ENCODE measurements at regions of chr13 and their contacts with region 1.

Region 1: DNA sequence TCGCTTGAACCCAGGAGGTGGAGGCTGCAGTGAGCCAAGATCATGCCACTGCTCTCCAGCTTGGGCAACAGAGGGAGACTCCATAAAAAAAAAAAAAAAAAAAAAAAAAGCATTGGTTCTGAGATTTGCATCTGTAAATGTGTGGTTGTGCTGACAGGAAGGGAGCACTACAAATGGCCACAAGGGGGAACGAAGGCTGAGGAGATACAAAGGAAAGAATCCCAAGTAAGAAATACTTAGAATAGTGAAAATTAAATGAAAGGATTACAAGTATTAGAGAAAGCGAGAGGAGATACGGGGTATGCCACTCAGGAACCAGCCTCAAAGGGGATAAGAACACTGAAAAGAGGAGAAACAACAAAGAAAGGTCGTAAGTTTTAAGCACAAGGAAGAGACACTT is 284.9 kb downstream of the KLF12 start:
- DNase-seq: peak in 2 of 5 donors; percentile 20 to 29
- H3K4me3 ChIP-seq: no peak overlapping the region
- H3K4me3 Mint-ChIP-seq: peak overlapping the region in 5 of 8 donors; percentile 1 to 52 (median 10)
- H3K27ac ChIP-seq: no peak overlapping the region
- H3K27ac Mint-ChIP-seq: peak overlapping the region in 5 of 7 donors; percentile 6 to 62 (median 52)
- H3K4me1 ChIP-seq: peaks cover 33% of the 10 kb centered on the region
- H3K4me1 Mint-ChIP-seq: peaks cover 31 to 59% (median 48%) of the 10 kb centered on the region in 4 donors
- H3K27me3 ChIP-seq: no peaks in the 10 kb centered on the region
- H3K27me3 Mint-ChIP-seq: no peaks in the 10 kb centered on the region

Region 2: GRCh38 chr13:73835138-73835721 is 14.1 kb before region 1 on chr13:
- CTCF ChIA-PET with region 1: interaction called, 23 read pairs
- POLR2A ChIA-PET with region 1: no interaction called
- intact Hi-C with region 1: no loop called
- DNase-seq: peak in 4 of 5 donors; percentile 45 to 56 (median 49)
- H3K4me3 ChIP-seq: no peak overlapping the region
- H3K4me3 Mint-ChIP-seq: no peak overlapping the region
- H3K27ac ChIP-seq: no peak overlapping the region
- H3K27ac Mint-ChIP-seq: no peak overlapping the region
- H3K4me1 ChIP-seq: peaks cover 42% of the 10 kb centered on the region
- H3K4me1 Mint-ChIP-seq: peaks cover 34 to 69% (median 47%) of the 10 kb centered on the region in 4 donors
- H3K27me3 ChIP-seq: no peaks in the 10 kb centered on the region
- H3K27me3 Mint-ChIP-seq: no peaks in the 10 kb centered on the region

Region 3: DNA sequence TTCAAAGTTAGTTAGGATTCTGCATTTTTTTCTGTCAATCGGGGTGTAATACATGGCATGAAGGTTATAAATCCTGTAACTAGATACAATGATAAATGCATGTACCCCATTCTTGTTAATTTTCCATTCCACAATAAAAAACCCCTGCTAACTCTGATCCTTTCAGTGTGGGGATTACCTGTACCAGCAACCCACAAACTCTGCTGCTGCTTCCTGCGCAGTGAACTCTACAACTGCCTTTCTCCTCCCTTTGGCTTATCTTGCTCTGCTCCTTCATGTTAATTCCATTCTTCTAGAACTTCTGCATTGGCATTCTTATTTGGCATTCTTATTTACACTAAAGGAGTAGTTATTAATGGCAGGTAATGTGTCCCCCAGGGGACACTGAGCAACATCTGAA is 11.8 kb after region 1 on chr13:
- CTCF ChIA-PET with region 1: interaction called, 16 read pairs
- POLR2A ChIA-PET with region 1: interaction called, 5 read pairs
- intact Hi-C with region 1: no loop called
- DNase-seq: peak in 2 of 5 donors; percentile 9 to 39
- H3K4me3 ChIP-seq: no peak overlapping the region
- H3K4me3 Mint-ChIP-seq: peak overlapping the region in 7 of 8 donors; percentile 9 to 78 (median 55)
- H3K27ac ChIP-seq: no peak overlapping the region
- H3K27ac Mint-ChIP-seq: peak overlapping the region; percentile 33 to 86 (median 66)
- H3K4me1 ChIP-seq: peaks cover 80% of the 10 kb centered on the region
- H3K4me1 Mint-ChIP-seq: peaks cover 48 to 57% (median 54%) of the 10 kb centered on the region in 4 donors
- H3K27me3 ChIP-seq: no peaks in the 10 kb centered on the region
- H3K27me3 Mint-ChIP-seq: no peaks in the 10 kb centered on the region

Region 4: DNA sequence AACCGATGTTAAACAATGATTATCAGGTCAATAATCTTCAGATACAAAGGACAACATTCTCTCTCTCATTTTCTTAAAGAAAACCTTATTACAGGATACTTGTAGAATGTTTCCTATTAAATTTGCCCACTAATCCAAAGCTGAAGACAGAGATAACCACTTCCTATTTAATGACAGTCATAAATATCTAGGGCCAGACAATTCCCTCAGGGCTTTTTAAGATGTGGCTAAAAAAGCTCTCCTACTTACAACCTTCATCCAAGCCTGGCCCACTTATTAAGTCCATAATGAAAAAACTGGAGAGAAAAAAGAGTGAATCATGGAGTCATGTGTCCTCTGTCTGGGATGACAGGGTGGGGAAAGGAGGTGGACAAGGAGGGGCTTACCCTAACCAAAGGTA is 49.0 kb after region 1 on chr13:
- CTCF ChIA-PET with region 1: no interaction called
- POLR2A ChIA-PET with region 1: no interaction called
- intact Hi-C with region 1: no loop called
- DNase-seq: no peak
- H3K4me3 ChIP-seq: no peak overlapping the region
- H3K4me3 Mint-ChIP-seq: no peak overlapping the region
- H3K27ac ChIP-seq: no peak overlapping the region
- H3K27ac Mint-ChIP-seq: peak overlapping the region in 3 of 7 donors; percentile 22 to 38 (median 33)
- H3K4me1 ChIP-seq: peaks cover 52% of the 10 kb centered on the region
- H3K4me1 Mint-ChIP-seq: peaks cover 52 to 75% (median 62%) of the 10 kb centered on the region in 4 donors
- H3K27me3 ChIP-seq: no peaks in the 10 kb centered on the region
- H3K27me3 Mint-ChIP-seq: no peaks in the 10 kb centered on the region

Region 5: GRCh38 chr13:74398599-74398998 is 549.3 kb after region 1 on chr13:
- CTCF ChIA-PET with region 1: no interaction called
- POLR2A ChIA-PET with region 1: no interaction called
- intact Hi-C with region 1: no loop called
- DNase-seq: no peak
- H3K4me3 ChIP-seq: no peak overlapping the region
- H3K4me3 Mint-ChIP-seq: no peak overlapping the region
- H3K27ac ChIP-seq: no peak overlapping the region
- H3K27ac Mint-ChIP-seq: no peak overlapping the region
- H3K4me1 ChIP-seq: no peaks in the 10 kb centered on the region
- H3K4me1 Mint-ChIP-seq: no peaks in the 10 kb centered on the region
- H3K27me3 ChIP-seq: no peaks in the 10 kb centered on the region
- H3K27me3 Mint-ChIP-seq: no peaks in the 10 kb centered on the region